Body of pancreas (tissue), 4 donors: ENCODE measurements at regions of chr19 and their contacts with region 1.

Region 1: GRCh38 chr19:11079999-11080398 is 9.3 kb upstream of the LDLR start:
- DNase-seq: no peak
- ATAC-seq: no peak
- H3K4me3 ChIP-seq: no peak overlapping the region
- H3K27ac ChIP-seq: no peak overlapping the region
- H3K4me1 ChIP-seq: peaks cover 23% of the 10 kb centered on the region
- H3K27me3 ChIP-seq: no peaks in the 10 kb centered on the region
- CTCF ChIP-seq: no peak
- POLR2A ChIP-seq: no peak

Region 2: DNA sequence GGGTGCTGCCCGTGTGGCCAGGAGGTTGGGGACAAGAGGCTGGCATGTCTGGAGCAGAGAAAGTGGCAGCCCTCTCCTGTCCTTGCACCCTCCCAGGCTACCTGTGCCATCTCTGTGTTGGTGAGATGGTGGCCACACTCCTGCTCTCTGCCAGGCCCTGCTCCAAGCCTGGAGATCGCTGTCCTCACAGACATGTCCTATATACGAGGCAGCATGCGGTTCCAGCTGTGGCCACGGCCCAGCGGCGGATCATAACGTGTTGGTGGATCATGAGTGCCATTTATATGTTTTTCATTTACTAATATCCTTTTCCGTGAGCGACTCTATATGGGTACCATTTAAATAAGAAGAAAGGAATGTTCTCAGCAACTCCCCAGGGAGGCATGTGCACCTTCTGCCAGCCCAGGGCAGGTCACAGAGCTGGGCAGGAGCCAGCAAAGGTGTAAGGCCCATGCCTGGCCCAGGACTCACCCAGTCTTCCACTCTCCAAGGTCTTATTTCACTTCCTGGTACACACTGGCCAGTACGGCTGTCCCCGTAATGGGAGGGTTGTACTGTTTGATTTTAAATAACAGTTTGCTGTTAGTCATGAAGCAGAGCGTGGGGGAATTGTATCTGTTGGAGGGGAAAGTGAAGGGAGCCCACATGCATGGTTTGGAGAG is 37.9 kb before region 1 on chr19:
- intact Hi-C with region 1: loop called (anchors 5 kb)
- DNase-seq: peak; percentile 76 to 95 (median 91)
- ATAC-seq: peak; percentile 95
- H3K4me3 ChIP-seq: no peak overlapping the region
- H3K27ac ChIP-seq: peak overlapping the region; percentile 76 to 90 (median 87)
- H3K4me1 ChIP-seq: peaks cover 15% of the 10 kb centered on the region
- H3K27me3 ChIP-seq: no peaks in the 10 kb centered on the region
- CTCF ChIP-seq: no peak
- POLR2A ChIP-seq: peak in 2 of 3 donors; percentile 14 to 37

Region 3: DNA sequence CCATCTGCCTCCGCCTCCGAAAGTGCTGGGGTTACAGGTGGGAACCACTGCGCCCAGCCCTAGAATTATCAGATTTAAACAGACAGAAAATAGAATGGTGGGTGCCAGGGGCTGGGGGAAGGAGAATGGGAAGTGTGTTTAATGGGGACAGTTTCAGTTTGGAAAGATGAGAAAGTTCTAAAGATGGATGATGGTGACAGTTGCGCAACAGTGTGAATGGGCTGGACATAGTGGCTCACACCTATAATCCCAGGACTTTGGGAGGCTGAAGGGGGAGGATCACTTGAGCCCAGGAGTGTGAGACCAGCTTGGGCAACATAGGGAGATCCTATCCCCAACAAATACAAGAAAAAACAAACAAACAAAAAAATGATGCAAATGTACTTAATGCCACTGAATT is 101.5 kb after region 1 on chr19:
- intact Hi-C with region 1: no loop called
- DNase-seq: no peak
- ATAC-seq: no peak
- H3K4me3 ChIP-seq: no peak overlapping the region
- H3K27ac ChIP-seq: no peak overlapping the region
- H3K4me1 ChIP-seq: peaks cover 31% of the 10 kb centered on the region
- H3K27me3 ChIP-seq: no peaks in the 10 kb centered on the region
- CTCF ChIP-seq: no peak
- POLR2A ChIP-seq: no peak